GM12878 (cell line): ENCODE measurements at regions of chr18 and their contacts with region 1.

Region 1: GRCh38 chr18:55415258-55415871 is 172.6 kb downstream of the TCF4 start:
- DNase-seq: peak; percentile 9
- ATAC-seq: peak; percentile 99
- H3K4me3 ChIP-seq: no peak overlapping the region
- H3K27ac ChIP-seq: no peak overlapping the region
- H3K4me1 ChIP-seq: peaks cover 1% of the 10 kb centered on the region; the same call in 1 of the 2 replicates
- H3K27me3 ChIP-seq: no peaks in the 10 kb centered on the region
- CTCF ChIP-seq: peak; percentile 83 to 87 (median 85)
- EP300 ChIP-seq: no peak
- POLR2A ChIP-seq: no peak
- RAD21 ChIP-seq: peak; percentile 94

Region 2: DNA sequence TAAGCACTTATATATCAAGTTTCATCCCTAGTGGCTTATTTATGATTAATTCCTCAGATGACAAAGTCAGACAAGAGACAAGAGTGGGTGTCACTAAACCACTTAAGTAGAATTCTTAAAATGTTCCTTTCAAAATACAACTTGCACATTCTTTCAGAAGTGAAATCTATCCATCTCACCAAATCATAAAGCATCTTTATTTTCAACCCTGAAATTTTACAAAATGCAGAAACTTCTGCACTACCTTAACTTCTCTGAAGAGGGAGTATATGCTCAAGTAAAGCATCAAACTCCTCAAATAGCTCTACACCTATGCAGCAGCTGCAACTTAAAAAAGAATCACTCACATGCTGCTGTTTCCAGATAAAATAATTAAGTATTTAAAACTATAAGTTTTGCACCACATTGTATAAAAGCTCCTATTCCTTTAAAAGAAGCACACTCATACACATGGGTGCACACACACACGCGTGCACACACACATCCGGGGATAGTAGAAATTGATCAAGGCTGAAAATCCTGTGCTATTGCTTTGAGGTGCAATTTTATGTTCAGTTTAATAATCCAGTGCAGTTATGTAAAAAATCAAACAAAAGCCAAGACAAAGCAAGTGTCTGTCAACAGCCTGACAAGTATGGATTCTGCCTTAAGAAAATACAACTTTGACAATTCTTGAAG is 71.8 kb before region 1 on chr18:
- CTCF ChIA-PET with region 1: interaction called, 11 read pairs
- POLR2A ChIA-PET with region 1: no interaction called
- RAD21 ChIA-PET with region 1: interaction called, 3 read pairs
- SMC1A ChIA-PET with region 1: interaction called, 12 read pairs
- in situ Hi-C with region 1: no loop called
- intact Hi-C with region 1: no loop called
- DNase-seq: no peak
- ATAC-seq: peak; percentile 82
- H3K4me3 ChIP-seq: no peak overlapping the region
- H3K27ac ChIP-seq: no peak overlapping the region
- H3K4me1 ChIP-seq: no peaks in the 10 kb centered on the region
- H3K27me3 ChIP-seq: peaks cover 0 to 3% of the 10 kb centered on the region in 2 experiments; a peak in 1 of 4 replicates
- CTCF ChIP-seq: peak; percentile 58 to 65 (median 58); a peak in 5 of 6 replicates
- EP300 ChIP-seq: no peak
- POLR2A ChIP-seq: no peak
- RAD21 ChIP-seq: peak; percentile 68

Region 3: DNA sequence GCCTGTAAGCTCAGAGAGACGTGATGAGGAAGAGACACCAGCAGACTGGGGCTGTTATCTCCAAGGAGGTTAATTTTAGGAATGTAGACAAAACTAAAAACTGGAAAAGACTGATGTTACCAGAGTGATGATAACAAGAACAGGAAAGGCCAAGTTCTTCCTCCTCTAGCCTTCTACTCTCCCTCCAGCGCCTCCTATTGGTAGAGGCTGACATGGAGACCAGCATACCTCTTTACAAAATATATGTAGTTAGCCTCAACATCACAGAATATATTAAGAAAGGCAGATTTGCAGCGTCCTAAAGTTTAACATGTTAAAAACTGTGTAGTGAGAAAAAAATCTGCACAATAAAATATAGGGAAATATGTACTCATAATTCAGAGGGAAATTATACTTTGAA is 106.6 kb after region 1 on chr18:
- CTCF ChIA-PET with region 1: interaction called, 6 read pairs
- POLR2A ChIA-PET with region 1: no interaction called
- RAD21 ChIA-PET with region 1: no interaction called
- SMC1A ChIA-PET with region 1: no interaction called
- in situ Hi-C with region 1: no loop called
- intact Hi-C with region 1: loop called (anchors 2 kb)
- DNase-seq: no peak
- ATAC-seq: peak; percentile 70
- H3K4me3 ChIP-seq: no peak overlapping the region
- H3K27ac ChIP-seq: no peak overlapping the region
- H3K4me1 ChIP-seq: no peaks in the 10 kb centered on the region
- H3K27me3 ChIP-seq: no peaks in the 10 kb centered on the region
- CTCF ChIP-seq: peak; percentile 44 to 63 (median 55)
- EP300 ChIP-seq: no peak
- POLR2A ChIP-seq: no peak
- RAD21 ChIP-seq: peak; percentile 64

Region 4: GRCh38 chr18:55589625-55590291 is 174.4 kb after region 1 on chr18:
- CTCF ChIA-PET with region 1: no interaction called
- POLR2A ChIA-PET with region 1: no interaction called
- RAD21 ChIA-PET with region 1: no interaction called
- SMC1A ChIA-PET with region 1: no interaction called
- in situ Hi-C with region 1: no loop called
- intact Hi-C with region 1: loop called (anchors 10 kb)
- DNase-seq: peak; percentile 2
- ATAC-seq: peak; percentile 77
- H3K4me3 ChIP-seq: peak overlapping the region; percentile 64
- H3K27ac ChIP-seq: no peak overlapping the region
- H3K4me1 ChIP-seq: no peaks in the 10 kb centered on the region
- H3K27me3 ChIP-seq: peaks cover 0 to 7% of the 10 kb centered on the region in 2 experiments; a peak in 3 of 4 replicates
- CTCF ChIP-seq: no peak
- EP300 ChIP-seq: no peak
- POLR2A ChIP-seq: peak; percentile 71
- RAD21 ChIP-seq: no peak

Region 5: DNA sequence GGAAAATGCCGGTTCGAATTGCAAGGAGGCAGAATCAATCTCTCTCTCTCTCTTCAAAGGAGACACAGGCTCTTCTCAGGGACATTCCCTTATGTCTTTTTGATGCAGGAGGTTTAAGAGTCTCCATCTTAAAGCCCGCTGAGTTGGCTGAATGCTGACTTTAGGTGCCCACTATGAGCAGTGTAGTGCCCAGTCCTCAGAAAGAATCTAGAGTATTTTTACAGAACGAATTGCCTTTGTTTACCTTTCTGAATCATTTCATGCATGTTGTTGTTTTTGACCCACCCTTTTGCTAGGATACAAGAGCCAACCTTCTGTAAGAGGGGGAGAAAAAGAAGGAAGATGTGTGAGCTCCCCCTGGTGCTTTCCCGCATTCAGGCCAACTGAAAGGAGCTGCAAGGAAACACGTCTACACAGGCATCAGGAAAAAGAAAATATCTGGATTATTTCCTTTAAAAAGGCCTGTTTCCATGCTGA is 366.2 kb after region 1 on chr18:
- CTCF ChIA-PET with region 1: no interaction called
- POLR2A ChIA-PET with region 1: no interaction called
- RAD21 ChIA-PET with region 1: no interaction called
- SMC1A ChIA-PET with region 1: no interaction called
- in situ Hi-C with region 1: no loop called
- intact Hi-C with region 1: loop called (anchors 1 kb)
- DNase-seq: no peak
- ATAC-seq: no peak
- H3K4me3 ChIP-seq: no peak overlapping the region
- H3K27ac ChIP-seq: no peak overlapping the region
- H3K4me1 ChIP-seq: no peaks in the 10 kb centered on the region
- H3K27me3 ChIP-seq: peaks cover 0 to 23% of the 10 kb centered on the region in 2 experiments; a peak in 3 of 4 replicates
- CTCF ChIP-seq: 0 out of 6 replicates have a peak, but pooled peaks of 1 of the 3 experiments have one; percentile 5
- EP300 ChIP-seq: no peak
- POLR2A ChIP-seq: no peak
- RAD21 ChIP-seq: 0 out of 2 replicates have a peak, but pooled peaks have one; percentile 22